Left ventricle myocardium inferior (tissue), 1 donor: ENCODE measurements at regions of chr7 and their contacts with region 1.

Region 1: GRCh38 chr7:112550468-112551060 is 69.8 kb downstream of the LSMEM1 start:
- DNase-seq: no peak
- H3K4me3 ChIP-seq: no peak overlapping the region
- H3K27ac ChIP-seq: no peak overlapping the region
- H3K4me1 ChIP-seq: no peaks in the 10 kb centered on the region
- H3K27me3 ChIP-seq: peaks cover 9% of the 10 kb centered on the region
- CTCF ChIP-seq: peak; percentile 96

Region 2: GRCh38 chr7:112630565-112630964 is 80.0 kb after region 1 on chr7:
- intact Hi-C with region 1: no loop called
- DNase-seq: no peak
- H3K4me3 ChIP-seq: no peak overlapping the region
- H3K27ac ChIP-seq: no peak overlapping the region
- H3K4me1 ChIP-seq: no peaks in the 10 kb centered on the region
- H3K27me3 ChIP-seq: no peaks in the 10 kb centered on the region
- CTCF ChIP-seq: no peak

Region 3: DNA sequence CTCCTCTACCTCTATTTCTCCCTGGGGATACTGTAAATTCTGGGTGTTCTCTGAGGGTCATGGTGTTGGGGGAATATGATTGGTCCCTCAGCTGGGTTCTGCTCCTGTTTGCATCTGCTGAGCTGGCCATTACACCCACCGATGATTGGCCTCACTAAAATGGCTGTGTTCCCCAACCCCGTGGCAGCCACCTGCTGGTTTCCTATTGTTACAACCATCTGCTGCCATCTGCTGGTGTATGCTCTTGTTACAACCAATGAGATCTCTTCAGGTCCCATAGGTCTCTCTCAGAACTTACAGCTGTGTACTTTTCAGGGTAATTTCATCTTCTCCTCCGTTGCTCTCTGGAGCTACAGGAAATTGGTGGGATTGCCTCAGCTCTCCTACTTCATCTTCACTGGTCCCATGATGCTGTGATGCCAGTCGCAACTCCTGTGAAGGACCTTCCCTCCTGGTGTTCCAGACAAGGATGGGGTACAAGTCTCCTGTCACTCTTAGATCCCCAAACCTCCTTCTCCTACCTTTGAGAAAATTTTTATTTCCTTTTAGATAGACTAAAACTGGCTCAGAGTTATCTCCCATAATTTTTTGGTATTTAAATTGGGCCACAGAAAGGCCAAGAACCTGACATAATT is 871.2 kb after region 1 on chr7:
- intact Hi-C with region 1: loop called (anchors 5 kb)
- DNase-seq: peak; percentile 37
- H3K4me3 ChIP-seq: no peak overlapping the region
- H3K27ac ChIP-seq: no peak overlapping the region
- H3K4me1 ChIP-seq: no peaks in the 10 kb centered on the region
- H3K27me3 ChIP-seq: no peaks in the 10 kb centered on the region
- CTCF ChIP-seq: peak; percentile 82